Activated B cell treated with CpG ODN at 0.5 μM for 24 hours (primary cell): ENCODE measurements at regions of chr18 and their contacts with region 1.

Region 1: DNA sequence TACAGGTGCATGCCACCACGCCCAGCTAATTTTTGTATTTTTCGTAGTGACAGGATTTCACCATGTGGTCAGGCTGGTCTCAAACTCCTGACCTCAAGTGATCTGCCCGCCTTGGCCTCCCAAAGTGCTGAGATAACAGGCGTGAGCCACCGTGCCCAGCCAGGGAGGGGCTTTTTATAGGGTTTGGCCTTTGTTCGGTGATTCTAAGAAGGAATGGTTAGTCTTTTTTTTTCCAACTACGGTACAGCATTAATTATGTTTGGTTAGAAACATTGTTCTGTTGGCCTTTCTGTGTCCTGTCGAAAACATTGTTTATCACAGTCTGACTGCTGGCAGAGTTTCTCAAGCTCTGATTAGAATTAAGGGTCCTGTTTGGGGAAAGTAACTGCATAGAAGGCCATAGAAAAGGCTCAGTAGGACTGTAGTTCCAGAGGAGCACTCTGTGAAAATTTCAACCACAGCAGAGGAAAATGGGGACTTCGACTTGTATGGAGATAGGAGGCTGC is 19.3 kb upstream of the SMCHD1 start:
- DNase-seq: no peak
- ATAC-seq: peak; percentile 11
- H3K4me3 Mint-ChIP-seq: peak overlapping the region; percentile 72
- H3K27ac Mint-ChIP-seq: peak overlapping the region; percentile 99
- H3K4me1 Mint-ChIP-seq: peaks cover 96% of the 10 kb centered on the region
- H3K27me3 Mint-ChIP-seq: no peaks in the 10 kb centered on the region
- CTCF ChIP-seq: no peak

Region 2: DNA sequence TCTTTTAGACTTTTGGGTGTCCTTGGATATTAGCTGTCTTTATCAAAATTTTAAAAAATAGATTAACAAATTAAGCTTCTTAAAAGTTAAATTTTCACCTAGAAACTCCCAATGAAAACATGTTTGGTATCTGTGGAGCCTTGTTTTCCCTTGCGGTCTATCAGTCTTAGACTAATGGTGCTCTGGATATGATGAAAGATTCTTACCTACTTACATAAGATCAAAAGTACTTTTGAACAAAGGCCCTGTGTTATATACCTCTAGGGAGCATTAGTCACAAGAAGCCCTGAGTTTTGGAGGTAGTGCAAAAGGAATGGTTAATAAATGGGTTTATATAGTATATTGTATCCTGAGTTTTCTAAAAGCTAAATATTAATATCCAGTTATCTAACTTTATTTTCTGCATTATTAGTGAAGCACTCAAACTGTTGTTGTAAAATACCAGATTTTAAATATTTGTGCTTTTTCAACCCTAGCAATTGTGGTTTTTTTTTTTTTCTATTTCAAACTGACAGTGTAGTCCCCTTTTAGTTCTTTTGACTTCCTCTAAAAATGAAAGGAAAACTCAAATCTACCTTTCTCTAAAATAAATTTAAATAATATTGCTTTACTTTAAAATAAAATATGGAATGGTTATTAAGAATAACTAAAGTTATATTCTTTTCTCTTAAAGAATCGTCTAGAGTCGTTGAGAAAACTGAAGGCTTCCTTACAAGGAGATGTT is 46.7 kb before region 1 on chr18:
- CTCF ChIA-PET with region 1: no interaction called
- POLR2A ChIA-PET with region 1: interaction called, 10 read pairs
- intact Hi-C with region 1: loop called (anchors 1 kb)
- DNase-seq: no peak
- ATAC-seq: peak; percentile 80
- H3K4me3 Mint-ChIP-seq: peak overlapping the region; percentile 46
- H3K27ac Mint-ChIP-seq: peak overlapping the region; percentile 74
- H3K4me1 Mint-ChIP-seq: peaks cover 22% of the 10 kb centered on the region
- H3K27me3 Mint-ChIP-seq: no peaks in the 10 kb centered on the region
- CTCF ChIP-seq: no peak

Region 3: GRCh38 chr18:2606335-2606734 is 29.8 kb before region 1 on chr18:
- CTCF ChIA-PET with region 1: interaction called, 4 read pairs
- POLR2A ChIA-PET with region 1: interaction called, 58 read pairs
- intact Hi-C with region 1: loop called (anchors 1 kb)
- DNase-seq: no peak
- ATAC-seq: no peak
- H3K4me3 Mint-ChIP-seq: peak overlapping the region; percentile 24
- H3K27ac Mint-ChIP-seq: peak overlapping the region; percentile 83
- H3K4me1 Mint-ChIP-seq: peaks cover 31% of the 10 kb centered on the region
- H3K27me3 Mint-ChIP-seq: no peaks in the 10 kb centered on the region
- CTCF ChIP-seq: no peak

Region 4: DNA sequence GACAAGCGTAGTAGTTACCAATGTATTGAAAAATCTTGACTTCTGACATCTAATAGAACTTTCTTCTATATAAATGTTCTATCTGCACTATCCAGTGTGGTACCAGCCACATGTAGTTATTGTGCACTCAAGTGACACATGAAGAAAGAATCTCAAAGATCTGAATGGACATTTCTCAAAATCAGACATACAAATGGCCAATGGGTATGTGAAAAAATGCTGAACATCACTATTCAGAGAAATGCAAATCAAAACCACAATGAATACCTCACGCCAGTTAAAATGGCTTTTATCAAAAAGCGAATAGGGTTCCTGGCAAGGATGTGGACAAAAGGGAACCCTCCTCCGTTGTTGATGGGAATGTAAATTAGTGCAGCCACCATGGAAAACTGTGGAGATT is 18.2 kb before region 1 on chr18:
- CTCF ChIA-PET with region 1: no interaction called
- POLR2A ChIA-PET with region 1: interaction called, 3 read pairs
- intact Hi-C with region 1: loop called (anchors 2 kb)
- DNase-seq: no peak
- ATAC-seq: no peak
- H3K4me3 Mint-ChIP-seq: no peak overlapping the region
- H3K27ac Mint-ChIP-seq: no peak overlapping the region
- H3K4me1 Mint-ChIP-seq: peaks cover 3% of the 10 kb centered on the region
- H3K27me3 Mint-ChIP-seq: no peaks in the 10 kb centered on the region
- CTCF ChIP-seq: no peak

Region 5: GRCh38 chr18:2672410-2672809 is 36.2 kb after region 1 on chr18:
- CTCF ChIA-PET with region 1: no interaction called
- POLR2A ChIA-PET with region 1: interaction called, 18 read pairs
- intact Hi-C with region 1: no loop called
- DNase-seq: no peak
- ATAC-seq: no peak
- H3K4me3 Mint-ChIP-seq: no peak overlapping the region
- H3K27ac Mint-ChIP-seq: no peak overlapping the region
- H3K4me1 Mint-ChIP-seq: peaks cover 8% of the 10 kb centered on the region
- H3K27me3 Mint-ChIP-seq: no peaks in the 10 kb centered on the region
- CTCF ChIP-seq: no peak